ENCODE measurements at regions of chr7 and their contacts with region 1.

Region 1: GRCh38 chr7:118175740-118176139 is 8.2 kb upstream of the LSM8 start:
- DNase-seq: no peak
- H3K4me3 Mint-ChIP-seq: no peak overlapping the region
- H3K27ac Mint-ChIP-seq: no peak overlapping the region
- H3K4me1 Mint-ChIP-seq: no peaks in the 10 kb centered on the region
- H3K27me3 Mint-ChIP-seq: peaks cover 9% of the 10 kb centered on the region

Region 2: GRCh38 chr7:116501425-116502167 is 1674.1 kb before region 1 on chr7:
- intact Hi-C with region 1: no loop called
- DNase-seq: no peak
- H3K4me3 Mint-ChIP-seq: no peak overlapping the region
- H3K27ac Mint-ChIP-seq: no peak overlapping the region
- H3K4me1 Mint-ChIP-seq: peaks cover 10% of the 10 kb centered on the region
- H3K27me3 Mint-ChIP-seq: peaks cover 46% of the 10 kb centered on the region

Region 3: DNA sequence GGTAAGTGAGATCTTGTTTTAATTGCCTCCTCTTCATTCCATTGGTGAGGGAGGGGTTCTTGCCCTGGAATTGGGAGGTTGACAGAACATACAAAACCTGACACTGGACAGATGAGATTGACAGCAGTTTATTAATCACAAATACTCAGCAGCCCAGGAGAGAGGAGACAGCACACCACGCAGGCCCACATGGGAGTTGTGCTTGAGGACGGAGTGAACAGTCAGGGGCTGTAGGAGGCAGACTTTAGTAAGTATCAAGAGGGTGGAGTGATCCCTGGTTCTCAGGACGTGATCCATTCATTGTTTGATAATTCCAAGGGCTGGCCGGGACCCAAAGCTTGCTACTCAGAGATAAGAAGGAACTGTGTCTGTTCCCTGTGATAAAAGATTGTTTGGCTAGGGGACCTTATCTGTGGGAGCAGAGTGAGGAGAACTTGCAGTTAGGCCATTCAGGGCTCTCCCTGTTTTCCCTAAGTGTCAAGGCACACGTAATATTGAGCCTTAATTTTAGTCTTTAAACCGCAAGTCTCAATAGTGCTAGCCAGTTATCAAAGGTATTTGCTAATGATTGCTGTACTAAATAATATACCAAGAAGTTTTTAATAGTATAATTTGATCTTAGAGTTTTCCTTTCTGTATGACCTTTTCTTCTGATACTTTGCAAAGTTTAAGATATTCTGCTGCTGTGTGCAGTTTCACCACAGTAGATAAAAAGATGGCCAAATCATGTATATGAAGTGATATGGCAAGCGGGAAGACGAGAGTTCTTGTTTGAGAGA is 1298.9 kb before region 1 on chr7:
- intact Hi-C with region 1: loop called (anchors 5 kb)
- DNase-seq: no peak
- H3K4me3 Mint-ChIP-seq: no peak overlapping the region
- H3K27ac Mint-ChIP-seq: no peak overlapping the region
- H3K4me1 Mint-ChIP-seq: peaks cover 29% of the 10 kb centered on the region
- H3K27me3 Mint-ChIP-seq: no peaks in the 10 kb centered on the region

Region 4: GRCh38 chr7:118525020-118525419 is 349.3 kb after region 1 on chr7:
- intact Hi-C with region 1: no loop called
- DNase-seq: no peak
- H3K4me3 Mint-ChIP-seq: no peak overlapping the region
- H3K27ac Mint-ChIP-seq: no peak overlapping the region
- H3K4me1 Mint-ChIP-seq: no peaks in the 10 kb centered on the region
- H3K27me3 Mint-ChIP-seq: no peaks in the 10 kb centered on the region